WTC11 (cell line): ENCODE measurements at regions of chr1 and their contacts with region 1.

Region 1: DNA sequence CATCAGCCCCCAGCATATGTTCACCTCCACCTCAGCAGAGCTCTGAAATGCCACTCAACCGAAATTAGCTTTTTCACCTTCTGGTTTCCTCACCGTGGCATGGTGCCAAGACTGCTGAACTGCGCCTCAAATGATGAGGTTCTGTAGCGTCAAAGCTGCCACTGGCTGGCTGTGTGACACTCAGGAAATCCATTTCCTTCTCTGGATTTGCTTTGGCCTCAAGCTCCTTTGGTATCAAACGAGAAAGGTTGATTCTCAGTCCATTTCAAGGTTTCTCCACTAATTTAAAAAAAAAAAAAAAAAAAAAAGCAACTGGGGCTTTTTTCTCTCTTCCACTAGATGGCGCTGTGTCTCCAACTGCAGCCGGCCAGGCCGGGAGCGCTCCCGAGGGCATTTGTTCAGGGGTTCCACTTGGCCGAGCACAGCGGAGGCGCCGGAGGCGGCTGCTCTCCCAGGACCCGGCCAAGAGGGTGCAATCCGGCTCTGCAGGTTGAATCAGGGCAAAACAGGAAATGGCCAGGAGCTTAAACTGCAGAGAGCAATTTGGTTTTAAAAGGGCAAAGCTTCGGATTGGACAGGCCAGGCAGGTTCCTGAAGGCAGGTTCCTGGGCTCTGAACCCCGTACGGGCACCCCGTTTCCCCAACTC is 26.5 kb upstream of the PLA2G2C start:
- DNase-seq: peak; percentile 91
- ATAC-seq: peak; percentile 95
- H3K4me3 Mint-ChIP-seq: peak overlapping the region; percentile 39
- H3K27ac Mint-ChIP-seq: peak overlapping the region; percentile 78; the same call in 1 of the 2 replicates
- H3K4me1 Mint-ChIP-seq: peaks cover 29% of the 10 kb centered on the region
- H3K27me3 Mint-ChIP-seq: no peaks in the 10 kb centered on the region
- CTCF ChIP-seq: peak; percentile 53

Region 2: DNA sequence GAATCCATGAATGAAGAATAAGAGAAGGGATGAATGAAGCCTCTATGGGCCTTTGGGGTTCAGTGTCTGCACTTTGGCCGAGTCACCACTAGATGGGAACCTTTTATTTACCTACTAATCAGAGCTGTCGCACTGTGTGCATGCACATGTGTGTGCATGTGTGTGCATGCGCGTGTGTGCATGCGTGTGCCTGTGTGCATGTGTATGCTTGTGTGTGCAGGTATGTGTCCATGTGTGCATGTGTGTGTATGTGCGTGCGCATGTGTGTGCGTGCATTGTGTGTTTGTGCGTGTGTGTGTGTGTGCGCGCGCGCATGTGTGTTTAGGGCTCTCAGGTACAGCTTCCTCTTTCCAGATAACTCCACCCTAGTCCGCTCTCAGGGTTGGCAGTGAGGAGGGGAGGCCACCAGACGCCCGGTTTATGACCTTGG is 47.3 kb before region 1 on chr1:
- CTCF ChIA-PET with region 1: interaction called, 13 read pairs
- POLR2A ChIA-PET with region 1: no interaction called
- DNase-seq: peak; percentile 36
- ATAC-seq: peak; percentile 69
- H3K4me3 Mint-ChIP-seq: no peak overlapping the region
- H3K27ac Mint-ChIP-seq: no peak overlapping the region
- H3K4me1 Mint-ChIP-seq: peaks cover 20% of the 10 kb centered on the region
- H3K27me3 Mint-ChIP-seq: peaks cover 6% of the 10 kb centered on the region
- CTCF ChIP-seq: peak; percentile 34; the same call in 1 of the 2 replicates

Region 3: DNA sequence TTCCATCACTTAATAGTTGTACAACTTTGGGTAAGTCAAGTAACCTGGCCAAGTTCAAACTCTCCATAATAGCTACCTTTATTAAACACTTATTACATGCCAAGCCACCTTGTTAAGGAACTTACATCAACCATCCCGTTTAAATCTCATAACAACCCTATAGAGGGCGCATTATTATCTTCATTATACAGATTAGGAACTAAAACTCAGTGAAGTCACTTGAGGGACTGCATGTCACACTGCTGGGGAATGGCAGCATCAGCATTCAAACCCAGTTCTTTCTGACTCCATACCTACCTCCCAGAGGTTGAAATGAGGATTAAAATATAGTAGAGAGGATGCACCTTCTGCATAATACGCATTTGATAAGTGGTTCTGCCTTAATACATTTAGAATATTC is 20.6 kb after region 1 on chr1:
- CTCF ChIA-PET with region 1: interaction called, 17 read pairs
- POLR2A ChIA-PET with region 1: no interaction called
- DNase-seq: no peak
- ATAC-seq: peak; percentile 57
- H3K4me3 Mint-ChIP-seq: no peak overlapping the region
- H3K27ac Mint-ChIP-seq: no peak overlapping the region
- H3K4me1 Mint-ChIP-seq: peaks cover 28% of the 10 kb centered on the region
- H3K27me3 Mint-ChIP-seq: no peaks in the 10 kb centered on the region; the same call in 1 of the 2 replicates
- CTCF ChIP-seq: no peak

Region 4: DNA sequence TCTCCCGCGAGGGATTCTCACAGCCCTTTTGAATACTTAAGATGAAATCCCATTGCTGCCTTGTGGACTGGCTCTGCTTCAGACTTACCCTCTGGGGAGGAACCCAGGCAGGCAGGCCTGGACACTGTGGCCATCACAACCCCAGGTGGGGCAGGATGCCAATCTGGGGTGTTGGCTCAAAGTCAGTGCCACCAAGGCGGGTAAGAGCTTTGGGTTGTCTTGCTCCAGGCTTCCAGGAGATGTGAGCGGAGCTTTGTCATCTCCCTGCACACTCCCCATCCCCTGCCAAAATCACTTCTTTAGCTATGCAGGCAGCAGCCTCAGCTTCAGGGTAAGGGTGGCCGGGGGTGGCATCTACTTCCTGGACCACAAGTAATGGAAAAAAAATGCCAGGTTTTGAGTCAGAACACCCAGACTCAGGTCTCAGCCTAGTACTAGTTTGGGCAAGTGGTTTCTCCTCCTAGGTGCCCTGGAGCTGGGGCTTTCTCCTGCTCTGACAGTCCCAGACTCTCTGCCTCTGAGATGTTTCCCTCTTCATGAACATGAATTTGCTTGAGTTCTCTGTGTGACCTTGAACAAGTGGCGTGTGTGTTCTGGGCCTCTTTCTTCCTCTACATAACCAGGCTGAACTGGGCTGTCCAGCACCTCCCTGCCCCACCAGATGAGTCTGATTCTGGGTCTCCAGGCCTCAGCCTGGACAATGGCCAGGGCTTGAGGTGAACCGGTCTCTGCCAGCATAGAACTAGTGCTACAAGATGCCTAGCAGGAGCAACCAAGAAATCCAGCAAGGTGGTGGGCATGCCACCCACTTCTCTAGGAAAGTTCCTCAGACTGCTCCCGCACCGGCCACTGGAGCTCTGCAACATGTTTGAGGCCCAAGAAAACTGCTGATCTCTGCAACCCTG is 143.3 kb after region 1 on chr1:
- CTCF ChIA-PET with region 1: interaction called, 10 read pairs
- POLR2A ChIA-PET with region 1: no interaction called
- DNase-seq: no peak
- ATAC-seq: no peak
- H3K4me3 Mint-ChIP-seq: no peak overlapping the region
- H3K27ac Mint-ChIP-seq: no peak overlapping the region
- H3K4me1 Mint-ChIP-seq: peaks cover 9% of the 10 kb centered on the region
- H3K27me3 Mint-ChIP-seq: no peaks in the 10 kb centered on the region; the same call in 1 of the 2 replicates
- CTCF ChIP-seq: no peak

Region 5: DNA sequence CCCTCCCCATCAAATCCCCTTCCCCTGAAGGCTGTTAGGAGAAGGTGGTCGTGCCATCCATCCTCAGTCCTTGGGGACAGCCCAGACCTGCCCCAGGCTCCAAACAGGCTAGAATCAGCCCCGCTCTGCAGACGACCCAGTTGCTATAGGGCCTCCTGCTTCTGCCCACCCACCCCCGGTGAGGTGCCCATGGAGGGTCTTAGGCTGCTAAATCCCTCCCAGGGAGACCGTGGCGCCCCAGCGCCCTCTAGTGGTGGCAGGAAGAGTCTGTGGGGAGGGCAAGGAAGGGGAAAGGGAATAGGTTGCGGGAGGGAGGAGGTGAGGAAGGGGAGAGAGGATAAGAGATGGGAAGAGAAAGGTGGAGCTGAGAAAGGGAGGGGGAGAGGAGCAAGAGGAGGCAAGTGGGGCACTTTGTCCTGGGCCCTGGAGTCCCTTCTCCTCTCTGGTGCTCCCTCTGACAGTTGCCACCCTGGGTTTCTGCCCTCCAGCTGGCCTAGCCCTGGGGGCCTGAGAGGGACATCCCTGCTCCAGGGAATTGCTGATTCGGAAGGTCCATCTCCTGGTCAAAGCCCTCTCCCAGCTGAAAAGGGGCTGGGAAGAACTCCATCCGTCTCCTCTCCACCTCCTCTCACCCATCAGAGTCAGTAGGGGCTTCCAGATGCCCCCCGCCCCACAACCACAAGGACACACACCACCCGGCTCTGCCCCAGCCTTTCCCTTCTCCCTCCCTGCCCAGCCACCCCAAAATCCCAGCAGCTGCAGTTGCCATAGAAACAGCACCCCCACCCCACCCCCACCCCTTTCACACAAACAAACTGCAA is 217.8 kb after region 1 on chr1:
- CTCF ChIA-PET with region 1: interaction called, 41 read pairs
- POLR2A ChIA-PET with region 1: interaction called, 3 read pairs
- DNase-seq: peak; percentile 85
- ATAC-seq: peak; percentile 97
- H3K4me3 Mint-ChIP-seq: no peak overlapping the region
- H3K27ac Mint-ChIP-seq: no peak overlapping the region
- H3K4me1 Mint-ChIP-seq: peaks cover 12% of the 10 kb centered on the region
- H3K27me3 Mint-ChIP-seq: peaks cover 42% of the 10 kb centered on the region
- CTCF ChIP-seq: peak; percentile 97

Region 6: DNA sequence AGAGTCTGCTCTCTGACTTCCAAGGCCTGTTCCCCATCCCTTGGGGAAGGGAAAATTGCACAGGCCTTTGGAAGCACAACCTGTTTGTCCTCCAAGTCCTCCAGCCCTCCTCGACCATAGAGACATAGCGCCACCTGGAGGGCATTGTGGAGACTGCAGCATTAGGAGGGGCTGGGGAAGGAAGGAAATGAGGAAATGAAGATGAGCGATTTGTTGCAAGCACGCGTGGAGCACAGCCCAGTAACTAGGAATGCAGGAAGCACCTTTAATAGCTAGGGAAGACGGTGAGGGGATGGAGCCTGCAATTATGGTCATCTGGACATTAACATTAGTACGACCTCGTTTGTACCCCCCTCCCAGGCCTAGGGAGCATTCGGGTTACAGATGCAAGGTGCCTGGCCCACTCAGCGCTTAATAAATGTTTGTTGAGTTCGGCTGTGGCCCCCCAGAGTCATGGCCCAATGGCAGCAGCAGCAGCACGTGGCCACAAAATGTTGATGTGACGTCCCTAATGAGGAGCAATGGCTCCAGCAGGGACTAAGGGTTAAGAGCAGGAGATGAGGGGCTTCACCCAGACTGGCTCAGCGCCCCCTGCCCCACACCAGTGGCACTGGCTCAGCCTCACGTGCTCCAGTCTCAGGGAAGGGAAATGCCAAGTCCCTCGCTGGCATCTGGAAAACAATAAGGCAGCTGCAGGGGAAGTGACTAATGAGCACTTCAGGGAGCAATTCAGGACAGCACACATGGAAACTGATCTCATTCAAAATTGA is 281.2 kb after region 1 on chr1:
- CTCF ChIA-PET with region 1: interaction called, 31 read pairs
- POLR2A ChIA-PET with region 1: interaction called, 3 read pairs
- DNase-seq: peak; percentile 93
- ATAC-seq: peak; percentile 82
- H3K4me3 Mint-ChIP-seq: no peak overlapping the region
- H3K27ac Mint-ChIP-seq: no peak overlapping the region
- H3K4me1 Mint-ChIP-seq: peaks cover 4% of the 10 kb centered on the region
- H3K27me3 Mint-ChIP-seq: peaks cover 22% of the 10 kb centered on the region
- CTCF ChIP-seq: peak; percentile 91